Gastrocnemius medialis (tissue), 4 donors: ENCODE measurements at regions of chr2 and their contacts with region 1.

Region 1: GRCh38 chr2:96951093-96951654 is 35.2 kb downstream of the FAM178B start:
- DNase-seq: peak; percentile 46 to 65
- ATAC-seq: peak; percentile 78 to 90
- H3K4me3 ChIP-seq: no peak overlapping the region
- H3K27ac ChIP-seq: no peak overlapping the region
- H3K4me1 ChIP-seq: peaks cover 0 to 7% of the 10 kb centered on the region in 2 donors
- H3K27me3 ChIP-seq: no peaks in the 10 kb centered on the region
- CTCF ChIP-seq: peak; percentile 89 to 98 (median 94)
- POLR2A ChIP-seq: no peak

Region 2: DNA sequence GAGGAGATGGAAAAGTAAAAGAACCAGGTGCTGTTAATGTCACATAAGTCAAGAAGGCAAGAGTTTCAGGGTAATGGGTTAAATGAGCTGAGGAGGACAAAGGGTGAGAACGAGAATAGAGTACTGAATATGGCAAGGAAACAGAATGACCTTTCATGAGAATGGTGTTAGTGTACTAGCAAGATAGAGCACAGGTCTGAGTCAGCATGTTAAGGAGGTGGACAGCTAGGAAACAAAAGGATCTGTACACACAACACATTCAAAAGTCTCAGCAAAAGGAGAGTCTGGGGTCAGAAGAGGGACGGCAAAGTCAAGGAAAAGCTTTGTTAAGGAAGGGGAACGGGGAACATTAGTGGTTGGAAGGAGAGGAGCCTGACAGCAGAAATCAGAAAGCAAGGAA is 240.2 kb before region 1 on chr2:
- in situ Hi-C with region 1: no loop called
- intact Hi-C with region 1: no loop called
- DNase-seq: no peak
- ATAC-seq: no peak
- H3K4me3 ChIP-seq: no peak overlapping the region
- H3K27ac ChIP-seq: no peak overlapping the region
- H3K4me1 ChIP-seq: no peaks in the 10 kb centered on the region
- H3K27me3 ChIP-seq: no peaks in the 10 kb centered on the region
- CTCF ChIP-seq: no peak
- POLR2A ChIP-seq: no peak

Region 3: DNA sequence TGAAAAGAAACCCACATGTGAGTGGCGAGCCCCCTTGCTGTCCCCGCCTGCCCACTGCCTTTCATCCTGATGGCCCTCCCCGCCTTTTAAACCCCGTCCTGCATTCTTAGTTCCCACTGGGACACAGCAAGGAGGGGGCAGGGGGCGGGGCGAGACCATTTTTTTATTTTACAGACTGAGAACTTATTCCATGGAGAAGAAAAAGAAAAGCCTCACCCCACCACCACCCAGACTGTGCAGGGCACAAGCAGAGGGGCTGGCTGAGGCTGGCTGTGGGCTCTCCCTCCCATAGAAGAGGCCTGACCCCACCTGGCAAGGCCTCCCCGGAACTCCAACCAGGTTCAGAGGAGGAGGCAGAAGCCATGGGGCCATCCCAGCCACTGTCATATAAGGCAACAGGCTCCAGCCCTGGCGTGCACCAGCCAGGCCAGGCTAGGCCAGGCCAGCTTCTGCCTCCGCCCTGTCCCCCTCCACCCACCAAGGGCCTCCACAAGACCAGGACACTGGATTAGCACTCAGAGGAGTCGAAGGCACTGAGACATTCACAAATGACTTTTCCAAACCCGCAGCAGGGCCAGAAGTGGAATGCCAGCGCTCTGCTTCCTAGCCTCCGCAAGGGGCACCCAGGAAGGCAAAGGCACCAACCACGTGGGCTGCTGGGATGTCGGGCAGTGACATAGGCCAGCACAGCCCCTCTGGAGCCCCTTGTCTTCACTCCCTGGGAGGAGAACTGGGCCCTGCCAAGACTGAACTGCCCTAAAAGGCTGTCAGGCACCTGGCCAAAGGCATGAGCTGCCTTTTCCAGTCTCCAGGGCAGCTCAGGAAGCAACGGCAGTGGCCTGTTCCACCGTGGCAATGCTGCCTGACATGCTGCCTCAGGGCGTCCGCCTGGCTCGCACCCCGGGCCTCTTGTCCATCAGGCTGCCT is 43.8 kb before region 1 on chr2:
- in situ Hi-C with region 1: no loop called
- intact Hi-C with region 1: loop called (anchors 5 kb)
- DNase-seq: peak; percentile 53 to 79
- ATAC-seq: peak; percentile 77 to 88
- H3K4me3 ChIP-seq: peak overlapping the region; percentile 18 to 32 (median 24)
- H3K27ac ChIP-seq: peak overlapping the region; percentile 69 to 80 (median 78)
- H3K4me1 ChIP-seq: peaks cover 24 to 26% of the 10 kb centered on the region in 2 donors
- H3K27me3 ChIP-seq: no peaks in the 10 kb centered on the region
- CTCF ChIP-seq: peak in 2 of 5 experiments; percentile 4 to 12
- POLR2A ChIP-seq: peak; percentile 26 to 38

Region 4: DNA sequence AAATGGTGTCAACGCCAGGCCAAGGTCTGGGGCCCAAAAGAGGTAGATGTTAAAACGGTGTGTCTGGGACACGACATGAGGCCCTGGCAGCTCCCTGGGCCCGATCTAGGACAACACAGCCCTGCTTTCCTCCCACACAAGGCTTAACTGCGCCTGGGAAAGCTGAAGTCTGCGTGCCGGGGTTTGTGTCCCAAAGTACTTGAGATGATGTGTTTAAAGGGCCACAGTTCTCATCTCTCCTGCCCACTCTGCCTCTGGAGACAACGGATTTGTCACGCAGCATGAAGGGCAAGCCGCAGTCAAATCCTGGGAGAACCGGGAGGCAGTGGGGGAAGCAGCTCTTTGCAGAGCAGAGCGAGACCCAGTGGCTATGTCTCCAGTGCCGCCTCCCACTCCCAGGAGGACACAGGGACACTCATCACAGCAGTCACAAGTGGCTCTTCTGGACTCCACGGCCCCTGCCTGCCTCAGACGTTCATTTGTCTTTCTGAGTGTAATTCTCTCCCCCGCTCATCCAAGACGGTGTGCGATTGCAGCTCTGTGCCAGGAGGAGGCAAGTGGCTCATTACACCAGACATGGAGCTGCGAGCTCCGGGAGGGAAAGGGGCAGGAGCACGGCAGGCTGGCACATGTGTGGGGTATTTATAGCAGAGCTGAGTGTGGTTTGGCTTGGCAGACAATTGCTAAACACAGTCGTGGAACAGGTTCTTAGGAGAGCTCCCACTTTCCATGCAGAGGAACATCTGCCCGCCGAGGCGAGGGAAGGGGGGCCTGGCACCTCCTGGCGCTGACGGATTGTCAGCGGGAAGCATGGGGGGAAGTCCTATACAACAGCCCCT is 23.6 kb before region 1 on chr2:
- in situ Hi-C with region 1: no loop called
- intact Hi-C with region 1: loop called (anchors 2 kb)
- DNase-seq: peak; percentile 76 to 87
- ATAC-seq: peak; percentile 96 to 98
- H3K4me3 ChIP-seq: peak overlapping the region; percentile 16 to 39 (median 28)
- H3K27ac ChIP-seq: peak overlapping the region; percentile 43 to 62 (median 58)
- H3K4me1 ChIP-seq: peaks cover 12 to 19% of the 10 kb centered on the region in 2 donors
- H3K27me3 ChIP-seq: no peaks in the 10 kb centered on the region
- CTCF ChIP-seq: peak in 4 of 5 experiments; percentile 16 to 35 (median 32)
- POLR2A ChIP-seq: peak in 1 of 2 donors; percentile 23